Heart right ventricle (tissue), 16 donors: ENCODE measurements at regions of chr2 and their contacts with region 1.

Region 1: DNA sequence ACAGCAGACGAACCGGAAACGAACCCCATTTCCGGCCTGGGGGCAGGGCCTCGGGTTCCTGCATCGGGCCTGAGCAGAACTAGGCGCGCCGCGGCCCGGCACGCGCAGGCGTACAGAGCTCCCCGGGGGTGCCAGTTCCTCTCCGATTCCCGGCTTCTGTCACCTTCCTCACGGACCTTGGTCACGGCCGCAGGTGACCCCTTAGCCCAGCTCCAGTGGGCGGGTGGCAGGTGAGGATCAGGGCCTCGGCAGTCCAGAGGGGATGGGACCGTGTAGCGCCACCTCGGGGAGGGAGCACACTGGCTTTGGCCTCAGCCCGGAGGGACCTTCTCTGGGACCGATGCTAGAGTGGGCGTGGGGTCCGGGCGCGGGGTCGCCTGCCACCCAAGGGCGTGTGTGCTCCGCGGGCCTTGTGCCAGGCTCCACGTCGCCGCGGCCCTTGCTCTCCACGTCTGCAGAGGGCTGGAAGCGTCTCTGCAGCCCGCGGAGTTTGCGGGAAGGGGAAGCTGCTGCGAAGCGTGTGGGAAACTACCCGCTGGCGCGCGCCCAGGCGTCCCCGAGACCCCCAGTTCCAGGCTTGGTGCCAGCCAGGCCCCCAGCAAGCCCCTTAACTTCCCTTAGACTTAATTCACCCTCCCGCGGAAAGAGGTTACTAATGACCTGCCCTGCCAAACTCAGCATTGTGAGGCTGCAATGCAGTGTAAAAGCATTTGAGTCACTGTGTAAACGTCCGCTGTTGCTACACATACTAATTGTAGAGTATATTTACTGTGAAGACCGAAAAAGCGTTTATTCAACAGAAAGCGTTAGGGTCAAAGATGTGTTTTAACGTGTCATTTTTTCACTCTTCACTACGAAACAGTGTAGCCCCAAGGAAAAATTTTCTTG is at the start of gene TRAPPC12:
- DNase-seq: peak; percentile 90 to 91
- ATAC-seq: peak; percentile 85 to 95 (median 90)
- H3K4me3 ChIP-seq: peak within 1 kb of the TSS; percentile 61 to 99 (median 88)
- H3K27ac ChIP-seq: peak within 1 kb of the TSS; percentile 38 to 98 (median 92)
- H3K4me1 ChIP-seq: peaks cover 6 to 46% (median 40%) of the 10 kb centered on the region in 9 donors
- H3K27me3 ChIP-seq: no peaks in the 10 kb centered on the region
- CTCF ChIP-seq: peak in 6 of 9 donors; percentile 34 to 68 (median 56)
- total RNA-seq, gene TRAPPC12: 71.9 to 135 (median 89.6) TPM

Region 2: GRCh38 chr2:3405876-3406275 is 26.0 kb after region 1 on chr2:
- intact Hi-C with region 1: loop called in 1 of 10 experiments (anchors 2 kb)
- DNase-seq: peak; percentile 36 to 60
- ATAC-seq: peak; percentile 59 to 87 (median 72)
- H3K4me3 ChIP-seq: no peak overlapping the region
- H3K27ac ChIP-seq: peak overlapping the region in 8 of 10 donors; percentile 11 to 64 (median 35)
- H3K4me1 ChIP-seq: peaks cover 0 to 46% (median 15%) of the 10 kb centered on the region in 9 donors
- H3K27me3 ChIP-seq: no peaks in the 10 kb centered on the region
- CTCF ChIP-seq: no peak

Region 3: DNA sequence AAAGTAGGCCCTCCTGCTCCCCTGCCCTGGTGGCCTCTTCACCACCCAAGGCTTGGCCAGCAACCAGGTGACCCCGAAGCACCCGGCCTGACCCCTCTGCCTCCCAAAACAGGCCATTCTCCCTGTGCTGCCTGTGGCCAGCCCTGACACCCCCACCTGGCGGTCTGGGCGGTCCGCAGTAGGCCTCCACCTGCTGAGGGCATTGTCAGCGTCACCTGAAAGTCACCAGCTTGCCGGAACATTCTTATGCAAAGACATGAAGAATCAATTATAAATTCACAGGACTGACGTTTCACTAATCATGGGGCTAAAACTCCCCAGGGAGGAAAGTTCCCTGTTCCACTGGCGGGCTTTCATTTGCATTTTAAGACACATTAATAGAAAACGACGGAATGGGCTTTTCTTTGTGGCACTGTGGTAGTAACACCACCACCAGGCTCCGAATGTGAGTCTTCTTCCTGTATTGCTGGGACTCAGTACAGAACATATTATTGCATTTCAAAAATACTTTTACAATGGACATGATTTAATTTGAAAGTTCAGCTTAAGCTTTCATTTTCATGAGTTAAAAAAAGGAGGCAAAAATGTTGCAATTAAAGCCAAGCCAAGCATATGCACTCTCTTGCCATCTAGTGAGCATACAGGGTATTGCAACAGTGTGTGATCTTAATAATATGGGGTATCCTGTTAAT is 82.1 kb after region 1 on chr2:
- intact Hi-C with region 1: loop called in 3 of 10 experiments (anchors 1 to 5 kb)
- DNase-seq: peak in 1 of 2 donors; percentile 50
- ATAC-seq: no peak
- H3K4me3 ChIP-seq: no peak overlapping the region
- H3K27ac ChIP-seq: peak overlapping the region in 8 of 10 donors; percentile 8 to 84 (median 44)
- H3K4me1 ChIP-seq: peaks cover 14 to 63% (median 47%) of the 10 kb centered on the region in 9 donors
- H3K27me3 ChIP-seq: no peaks in the 10 kb centered on the region
- CTCF ChIP-seq: peak; percentile 88 to 96 (median 94)

Region 4: GRCh38 chr2:3545788-3546478 is 166.0 kb after region 1 on chr2:
- intact Hi-C with region 1: no loop called
- DNase-seq: no peak
- ATAC-seq: no peak
- H3K4me3 ChIP-seq: no peak overlapping the region
- H3K27ac ChIP-seq: no peak overlapping the region
- H3K4me1 ChIP-seq: peaks cover 0 to 10% (median 3%) of the 10 kb centered on the region in 9 donors
- H3K27me3 ChIP-seq: no peaks in the 10 kb centered on the region
- CTCF ChIP-seq: no peak

Region 5: GRCh38 chr2:3558205-3559014 is 178.5 kb after region 1 on chr2 and contains the start of gene RNASEH1:
- intact Hi-C with region 1: loop called in 1 of 10 experiments (anchors 1 kb)
- DNase-seq: peak; percentile 98 to 99
- ATAC-seq: peak; percentile 99 to 100 (median 100)
- H3K4me3 ChIP-seq: peak within 1 kb of the TSS; percentile 89 to 100 (median 94)
- H3K27ac ChIP-seq: peak within 1 kb of the TSS; percentile 73 to 97 (median 91)
- H3K4me1 ChIP-seq: peaks cover 0 to 21% (median 19%) of the 10 kb centered on the region in 9 donors
- H3K27me3 ChIP-seq: no peaks in the 10 kb centered on the region
- CTCF ChIP-seq: no peak
- total RNA-seq, gene RNASEH1: 17.3 to 24.0 (median 19.9) TPM

Region 6: DNA sequence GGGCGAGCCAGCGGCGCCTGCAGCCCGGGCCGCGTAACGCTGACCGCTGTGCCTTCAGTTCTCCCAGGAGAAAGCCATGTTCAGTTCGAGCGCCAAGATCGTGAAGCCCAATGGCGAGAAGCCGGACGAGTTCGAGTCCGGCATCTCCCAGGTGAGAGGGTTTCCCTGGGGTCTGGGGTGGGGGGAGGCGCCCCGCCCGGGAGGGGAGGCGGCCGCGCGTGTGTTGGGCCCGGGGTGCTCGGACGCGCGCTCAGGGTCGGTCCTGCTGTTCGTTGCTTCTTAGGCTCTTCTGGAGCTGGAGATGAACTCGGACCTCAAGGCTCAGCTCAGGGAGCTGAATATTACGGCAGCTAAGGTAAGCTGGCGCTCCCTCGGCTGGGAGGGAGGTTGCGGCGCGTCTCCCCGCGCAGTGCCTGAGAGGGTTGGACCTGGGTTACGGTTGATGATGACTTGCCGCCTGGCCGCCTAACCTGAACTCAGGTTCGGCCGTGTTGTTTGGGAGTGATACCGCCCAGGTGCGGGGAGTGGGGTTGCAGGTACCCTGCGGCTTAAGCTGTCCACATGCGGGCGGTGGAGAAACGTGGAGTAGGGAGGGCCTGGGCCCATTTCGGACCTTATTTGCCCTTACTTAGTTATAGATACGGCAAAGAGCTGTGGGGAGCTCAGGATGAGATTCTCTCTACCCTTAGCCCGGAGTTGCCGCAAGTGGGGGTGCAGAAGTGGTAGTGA is 195.8 kb after region 1 on chr2:
- intact Hi-C with region 1: loop called in 1 of 10 experiments (anchors 5 kb)
- DNase-seq: peak in 1 of 2 donors; percentile 22
- ATAC-seq: peak; percentile 12 to 64 (median 26)
- H3K4me3 ChIP-seq: peak overlapping the region; percentile 72 to 95 (median 84)
- H3K27ac ChIP-seq: peak overlapping the region; percentile 70 to 94 (median 84)
- H3K4me1 ChIP-seq: peaks cover 3 to 45% (median 34%) of the 10 kb centered on the region in 9 donors
- H3K27me3 ChIP-seq: no peaks in the 10 kb centered on the region
- CTCF ChIP-seq: no peak

Region 7: GRCh38 chr2:3805201-3805939 is 425.5 kb after region 1 on chr2:
- intact Hi-C with region 1: no loop called
- DNase-seq: no peak
- ATAC-seq: peak in 1 of 8 donors; percentile 42
- H3K4me3 ChIP-seq: no peak overlapping the region
- H3K27ac ChIP-seq: no peak overlapping the region
- H3K4me1 ChIP-seq: no peaks in the 10 kb centered on the region
- H3K27me3 ChIP-seq: peaks cover 0 to 22% (median 4%) of the 10 kb centered on the region in 7 donors
- CTCF ChIP-seq: peak in 8 of 9 donors; percentile 14 to 41 (median 34)